Dorsolateral prefrontal cortex (tissue), 120 donors: ENCODE measurements at regions of chr14 and their contacts with region 1.

Region 1: GRCh38 chr14:64993266-64993930 is 6.7 kb downstream of the FNTB start:
- DNase-seq: no peak
- H3K4me3 ChIP-seq: no peak overlapping the region
- H3K27ac ChIP-seq: peak overlapping the region in 15 of 59 donors; percentile 1 to 53 (median 23)
- H3K27me3 ChIP-seq: no peaks in the 10 kb centered on the region
- CTCF ChIP-seq: no peak

Region 2: GRCh38 chr14:65156568-65157366 is 163.4 kb after region 1 on chr14:
- intact Hi-C with region 1: loop called in 1 of 2 experiments (anchors 5 kb)
- DNase-seq: no peak
- H3K4me3 ChIP-seq: peak overlapping the region in 2 of 59 donors; percentile 6 to 10
- H3K27ac ChIP-seq: peak overlapping the region in 7 of 59 donors; percentile 2 to 64 (median 41)
- H3K27me3 ChIP-seq: no peaks in the 10 kb centered on the region
- CTCF ChIP-seq: no peak

Region 3: GRCh38 chr14:65421201-65421981 is 428.0 kb after region 1 on chr14:
- intact Hi-C with region 1: no loop called
- DNase-seq: no peak
- H3K4me3 ChIP-seq: no peak overlapping the region
- H3K27ac ChIP-seq: peak overlapping the region in 8 of 59 donors; percentile 2 to 57 (median 18)
- H3K27me3 ChIP-seq: no peaks in the 10 kb centered on the region
- CTCF ChIP-seq: no peak